ENCODE measurements at regions of chr1 and their contacts with region 1.

Region 1: GRCh38 chr1:152089014-152089676 is at the start of gene TCHHL1:
- DNase-seq: peak; percentile 20
- H3K4me3 ChIP-seq: no peak within 1 kb of the TSS
- H3K27ac ChIP-seq: no peak within 1 kb of the TSS
- H3K4me1 ChIP-seq: no peaks in the 10 kb centered on the region
- H3K27me3 ChIP-seq: peaks cover 2% of the 10 kb centered on the region
- CTCF ChIP-seq: no peak
- total RNA-seq, gene TCHHL1: not detected

Region 2: DNA sequence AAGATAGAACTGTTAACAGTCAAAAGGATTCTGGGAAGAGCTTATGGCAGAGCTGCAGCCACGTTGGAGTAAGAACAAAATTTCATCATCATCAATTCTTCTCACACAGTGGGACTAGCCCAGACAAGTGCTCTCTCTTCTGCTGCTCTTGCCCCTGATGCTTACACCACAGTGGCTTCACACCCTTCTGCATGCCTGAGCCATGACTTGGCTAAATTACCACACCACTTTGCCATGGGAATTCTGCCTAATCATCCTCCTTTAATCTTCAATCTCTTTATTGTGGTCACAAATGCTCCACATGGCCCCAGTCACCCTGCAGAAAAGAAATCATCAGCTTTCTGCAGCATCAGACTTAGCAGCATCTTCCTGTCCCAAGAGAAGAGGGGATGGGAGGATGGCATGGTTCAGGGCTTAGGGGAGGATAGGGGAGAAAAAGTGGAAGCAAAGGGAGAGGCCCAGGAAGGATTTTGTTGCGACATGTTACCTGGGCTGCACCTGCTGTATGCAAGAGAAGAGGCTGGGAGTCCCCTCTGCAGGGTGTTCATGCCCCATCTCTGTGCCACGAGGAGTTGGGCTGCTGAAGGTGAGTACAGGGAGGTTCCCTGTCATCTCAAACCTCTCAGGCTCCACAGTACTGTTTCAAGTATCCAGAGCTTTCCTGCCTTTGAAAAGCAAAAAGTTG is 78.8 kb after region 1 on chr1:
- CTCF ChIA-PET with region 1: no interaction called
- dilution Hi-C with region 1: loop called (anchors 5 kb)
- in situ Hi-C with region 1: no loop called
- intact Hi-C with region 1: no loop called
- DNase-seq: peak; percentile 99
- H3K4me3 ChIP-seq: no peak overlapping the region
- H3K27ac ChIP-seq: peak overlapping the region; percentile 68
- H3K4me1 ChIP-seq: peaks cover 42% of the 10 kb centered on the region
- H3K27me3 ChIP-seq: no peaks in the 10 kb centered on the region
- CTCF ChIP-seq: no peak

Measured in mammary epithelial cell (primary cell).